ENCODE measurements at regions of chr2 and their contacts with region 1.

Region 1: DNA sequence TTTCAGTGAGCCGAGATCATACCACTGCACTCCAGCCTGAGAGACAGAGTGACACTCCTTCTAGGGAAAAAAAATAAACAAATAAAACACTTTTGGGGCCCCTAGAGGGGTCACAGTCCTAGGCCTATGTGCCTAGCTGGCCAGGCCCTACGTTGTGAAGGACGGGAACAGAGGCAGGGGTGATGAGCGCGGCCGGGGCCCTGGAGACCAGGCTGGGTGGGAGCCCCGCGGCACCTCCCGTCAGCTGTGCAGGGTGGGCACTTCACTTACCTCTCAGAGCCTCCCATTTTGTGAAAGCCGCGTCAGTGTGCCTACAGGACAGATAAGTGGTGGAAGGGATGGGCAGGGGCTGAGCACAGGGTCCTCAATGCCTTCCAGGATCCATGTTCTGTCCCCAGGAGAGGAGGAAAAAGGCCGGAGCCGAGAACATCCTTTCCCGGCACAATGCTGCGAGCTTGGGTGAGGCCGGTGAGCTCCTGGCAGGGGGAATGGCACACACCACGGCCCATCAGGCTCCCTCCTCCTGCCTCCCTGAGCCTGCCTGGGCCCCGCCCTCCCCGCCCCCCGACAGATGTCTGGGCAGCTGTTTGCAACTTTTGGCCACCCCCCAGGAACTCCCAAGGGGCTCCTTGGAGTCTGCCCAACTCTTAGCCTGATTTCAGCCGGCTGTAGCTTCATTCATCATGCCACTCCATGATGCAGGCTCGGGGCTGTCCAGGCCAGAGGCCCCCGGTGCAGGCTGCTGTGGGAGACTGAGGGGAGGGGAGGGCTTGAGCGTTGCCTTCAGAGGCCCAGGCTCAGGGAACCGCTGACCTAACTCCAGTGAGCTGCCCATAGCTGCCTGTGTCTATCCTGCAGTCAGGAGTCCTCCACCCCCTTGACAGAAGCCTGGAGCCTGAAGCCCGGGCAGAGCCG is 196.5 kb downstream of the TFCP2L1 start:
- DNase-seq: no peak
- ATAC-seq: no peak
- H3K4me3 ChIP-seq: no peak overlapping the region
- H3K4me3 Mint-ChIP-seq: no peak overlapping the region
- H3K27ac ChIP-seq: no peak overlapping the region
- H3K27ac Mint-ChIP-seq: no peak overlapping the region
- H3K4me1 ChIP-seq: no peaks in the 10 kb centered on the region
- H3K4me1 Mint-ChIP-seq: peaks cover 0 to 2% (median 0%) of the 10 kb centered on the region in 7 donors
- H3K27me3 ChIP-seq: no peaks in the 10 kb centered on the region
- H3K27me3 Mint-ChIP-seq: peaks cover 2 to 9% (median 4%) of the 10 kb centered on the region in 5 donors

Region 2: GRCh38 chr2:121128754-121129659 is 40.5 kb after region 1 on chr2:
- CTCF ChIA-PET with region 1: no interaction called
- POLR2A ChIA-PET with region 1: no interaction called
- intact Hi-C with region 1: no loop called
- DNase-seq: no peak
- ATAC-seq: peak; percentile 55
- H3K4me3 ChIP-seq: no peak overlapping the region
- H3K4me3 Mint-ChIP-seq: no peak overlapping the region
- H3K27ac ChIP-seq: no peak overlapping the region
- H3K27ac Mint-ChIP-seq: no peak overlapping the region
- H3K4me1 ChIP-seq: no peaks in the 10 kb centered on the region
- H3K4me1 Mint-ChIP-seq: peaks cover 0 to 3% (median 0%) of the 10 kb centered on the region in 7 donors
- H3K27me3 ChIP-seq: peaks cover 0 to 2% of the 10 kb centered on the region in 2 donors
- H3K27me3 Mint-ChIP-seq: peaks cover 0 to 14% (median 2%) of the 10 kb centered on the region in 5 donors

Region 3: DNA sequence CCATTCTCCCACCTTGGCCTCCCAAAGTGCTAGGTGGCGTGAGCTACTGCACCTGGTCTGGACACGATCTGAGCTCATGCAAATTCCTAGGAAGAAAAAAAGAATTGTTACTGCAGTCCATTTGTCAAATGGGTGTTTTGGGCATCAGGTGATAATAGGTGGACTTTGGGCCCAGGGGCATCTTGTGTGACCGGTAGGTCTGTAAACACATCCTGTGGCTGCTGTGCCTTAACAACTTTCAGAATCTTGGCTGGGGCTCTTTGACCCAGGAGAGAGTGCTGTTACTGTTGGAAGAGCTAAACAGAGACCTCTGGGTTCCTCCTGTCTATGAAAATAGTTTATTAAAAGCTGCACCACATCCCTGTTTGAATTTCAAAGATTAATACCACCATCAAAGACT is 231.4 kb after region 1 on chr2:
- CTCF ChIA-PET with region 1: no interaction called
- POLR2A ChIA-PET with region 1: no interaction called
- intact Hi-C with region 1: loop called in 1 of 2 experiments (anchors 2 kb)
- DNase-seq: no peak
- ATAC-seq: no peak
- H3K4me3 ChIP-seq: no peak overlapping the region
- H3K4me3 Mint-ChIP-seq: no peak overlapping the region
- H3K27ac ChIP-seq: no peak overlapping the region
- H3K27ac Mint-ChIP-seq: no peak overlapping the region
- H3K4me1 ChIP-seq: no peaks in the 10 kb centered on the region
- H3K4me1 Mint-ChIP-seq: no peaks in the 10 kb centered on the region
- H3K27me3 ChIP-seq: no peaks in the 10 kb centered on the region
- H3K27me3 Mint-ChIP-seq: peaks cover 0 to 13% (median 0%) of the 10 kb centered on the region in 5 donors

Region 4: DNA sequence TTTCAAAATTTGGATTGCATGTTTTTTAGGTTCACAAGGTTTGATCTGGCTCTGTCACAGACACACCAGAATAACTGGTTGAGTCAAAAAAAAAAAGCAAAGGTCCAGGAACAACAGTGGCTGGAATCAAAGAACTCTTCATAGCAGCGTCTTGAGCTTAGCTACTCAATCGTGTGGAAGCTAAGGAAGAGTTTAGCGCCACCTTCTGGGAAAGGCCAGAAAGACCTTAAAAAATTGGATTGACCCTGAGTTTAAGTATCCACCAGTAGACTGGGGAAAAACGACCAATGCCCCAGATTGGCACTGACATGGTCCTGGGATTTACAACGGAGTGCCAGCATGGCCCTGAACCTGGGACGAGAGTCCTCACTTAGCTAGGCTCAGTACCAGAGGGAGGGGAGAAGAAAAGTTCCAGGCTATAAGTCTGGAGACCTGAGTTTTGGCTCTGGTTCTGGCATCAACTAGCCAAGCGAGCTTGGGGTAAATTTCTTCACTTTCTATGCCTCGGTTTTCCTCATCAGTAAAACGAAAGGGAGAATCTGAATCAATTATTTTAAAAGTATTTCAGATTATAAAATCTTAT is 267.6 kb after region 1 on chr2:
- CTCF ChIA-PET with region 1: interaction called, 5 read pairs
- POLR2A ChIA-PET with region 1: no interaction called
- intact Hi-C with region 1: loop called in 1 of 2 experiments (anchors 5 kb)
- DNase-seq: no peak
- ATAC-seq: peak; percentile 66
- H3K4me3 ChIP-seq: no peak overlapping the region
- H3K4me3 Mint-ChIP-seq: no peak overlapping the region
- H3K27ac ChIP-seq: no peak overlapping the region
- H3K27ac Mint-ChIP-seq: peak overlapping the region in 2 of 9 donors; percentile 15 to 66
- H3K4me1 ChIP-seq: no peaks in the 10 kb centered on the region
- H3K4me1 Mint-ChIP-seq: peaks cover 0 to 4% (median 0%) of the 10 kb centered on the region in 7 donors
- H3K27me3 ChIP-seq: no peaks in the 10 kb centered on the region
- H3K27me3 Mint-ChIP-seq: no peaks in the 10 kb centered on the region